ENCODE measurements at regions of chr15 and their contacts with region 1.

Region 1: GRCh38 chr15:101014921-101015841 is 96.0 kb downstream of the LRRK1 start:
- DNase-seq: peak; percentile 41
- H3K4me3 Mint-ChIP-seq: no peak overlapping the region
- H3K27ac Mint-ChIP-seq: no peak overlapping the region
- H3K4me1 Mint-ChIP-seq: no peaks in the 10 kb centered on the region
- H3K27me3 Mint-ChIP-seq: no peaks in the 10 kb centered on the region

Region 2: DNA sequence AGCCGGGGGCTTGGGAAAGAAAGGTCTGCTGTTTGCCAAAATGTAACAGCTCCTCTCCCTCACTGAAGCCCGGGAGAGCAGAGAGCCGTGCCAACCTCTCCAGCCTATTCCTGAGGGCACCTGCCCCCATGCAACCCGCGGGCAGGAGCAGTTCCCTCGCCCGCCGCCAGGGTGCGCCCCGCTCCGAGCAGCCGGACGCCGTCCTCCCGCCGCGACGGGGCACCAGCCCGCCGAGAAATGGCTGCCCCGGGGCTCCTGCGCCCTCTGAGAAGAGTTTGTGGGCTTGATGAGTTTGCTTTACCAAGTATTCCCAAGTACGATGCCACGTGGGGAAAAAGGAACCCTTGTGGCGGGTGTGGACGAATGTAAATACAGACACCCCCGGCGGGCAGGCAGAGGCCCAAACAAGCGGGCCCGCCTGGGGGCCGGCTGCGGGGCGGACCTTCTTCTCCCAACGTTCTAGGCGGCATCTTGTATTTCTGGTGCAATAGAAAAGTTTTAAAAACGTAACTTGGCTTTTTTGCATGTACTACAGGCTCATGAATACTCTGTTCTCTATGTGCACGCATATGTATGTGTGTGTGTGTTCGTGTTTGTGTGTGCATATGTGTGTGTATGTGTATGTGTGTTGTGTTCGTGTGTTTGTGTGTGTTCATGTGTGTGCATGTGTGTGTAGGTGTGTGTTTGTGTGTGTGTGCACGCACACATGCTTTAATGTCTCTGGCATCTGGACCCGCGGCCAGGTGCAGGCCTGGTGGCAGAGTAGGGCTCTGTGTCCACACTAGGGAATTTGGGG is 73.8 kb after region 1 on chr15:
- intact Hi-C with region 1: loop called (anchors 5 kb)
- DNase-seq: peak; percentile 71
- H3K4me3 Mint-ChIP-seq: no peak overlapping the region
- H3K27ac Mint-ChIP-seq: no peak overlapping the region
- H3K4me1 Mint-ChIP-seq: peaks cover 10% of the 10 kb centered on the region
- H3K27me3 Mint-ChIP-seq: peaks cover 4% of the 10 kb centered on the region

Region 3: GRCh38 chr15:101152914-101153313 is 137.7 kb after region 1 on chr15:
- intact Hi-C with region 1: loop called (anchors 5 kb)
- DNase-seq: no peak
- H3K4me3 Mint-ChIP-seq: no peak overlapping the region
- H3K27ac Mint-ChIP-seq: no peak overlapping the region
- H3K4me1 Mint-ChIP-seq: peaks cover 24% of the 10 kb centered on the region
- H3K27me3 Mint-ChIP-seq: no peaks in the 10 kb centered on the region

Region 4: DNA sequence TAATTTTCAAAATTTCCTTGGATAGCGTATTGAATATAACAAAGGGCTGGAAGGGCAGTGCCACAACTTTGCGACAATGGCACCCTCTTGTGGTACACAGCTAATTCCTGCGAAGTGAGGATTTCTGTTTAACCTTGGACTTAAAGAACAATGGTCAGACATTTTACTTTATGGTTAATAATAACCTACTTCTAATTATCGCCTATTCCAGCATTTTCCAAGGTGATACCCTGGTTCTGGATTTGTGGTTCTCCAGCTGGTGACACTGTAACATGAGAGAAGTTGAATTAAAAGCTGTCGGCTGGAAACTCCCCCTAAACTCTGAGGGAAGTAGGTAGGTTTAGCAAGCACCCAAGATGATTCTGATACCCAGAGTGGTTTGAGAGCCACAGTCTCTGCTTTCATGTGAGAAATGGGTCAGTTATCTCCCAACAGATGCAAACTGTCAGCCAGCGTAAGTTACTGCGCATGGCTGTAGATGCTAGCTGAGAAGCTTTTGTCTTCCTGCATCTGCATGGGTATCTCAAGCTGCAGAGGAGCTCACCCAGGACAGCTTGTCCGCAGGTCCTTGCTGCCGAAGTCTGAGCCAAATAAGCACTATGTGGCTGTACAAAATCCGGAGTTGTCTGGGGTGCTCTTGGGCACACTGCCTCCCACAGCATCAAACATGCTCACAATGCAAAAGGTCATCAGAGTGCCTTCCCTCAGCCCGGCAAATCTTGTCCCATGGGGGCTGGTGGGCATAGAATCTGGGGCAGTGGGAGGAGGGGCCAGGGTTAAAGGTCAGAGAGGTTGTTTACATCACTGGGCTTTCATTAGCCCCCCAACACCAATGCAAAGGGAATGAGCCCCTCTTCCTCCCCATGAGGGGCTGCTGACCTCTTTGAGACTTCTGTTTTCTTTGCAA is 243.3 kb after region 1 on chr15:
- intact Hi-C with region 1: loop called (anchors 1 kb)
- DNase-seq: peak; percentile 36
- H3K4me3 Mint-ChIP-seq: no peak overlapping the region
- H3K27ac Mint-ChIP-seq: no peak overlapping the region
- H3K4me1 Mint-ChIP-seq: peaks cover 27% of the 10 kb centered on the region
- H3K27me3 Mint-ChIP-seq: peaks cover 16% of the 10 kb centered on the region

Measured in activated T-helper 2 cell treated with anti-CD3 and anti-CD28 coated beads, Interferon-gamma antibody, Interleukin-2, Interleukin-4, amounts not matched to agents 10 μg/mL and 5 μg/mL and 100 μg/mL, durations not matched to agents 14 hours and 24 hours and 36 hours (primary cell).